ENCODE measurements at regions of chr3 and their contacts with region 1.

Region 1: GRCh38 chr3:14467814-14468620 is 65.6 kb downstream of the SLC6A6 start:
- DNase-seq: peak; percentile 92
- H3K4me3 ChIP-seq: peak overlapping the region in 1 of 2 experiments; percentile 23; a peak in 1 of 4 replicates
- H3K27ac ChIP-seq: no peak overlapping the region
- H3K4me1 ChIP-seq: peaks cover 4 to 19% of the 10 kb centered on the region in 2 experiments; a peak in 3 of 4 replicates
- H3K27me3 ChIP-seq: no peaks in the 10 kb centered on the region
- CTCF ChIP-seq: peak; percentile 95
- EP300 ChIP-seq: no peak
- RAD21 ChIP-seq: peak; percentile 93

Region 2: GRCh38 chr3:14253022-14253706 is 214.9 kb before region 1 on chr3:
- CTCF ChIA-PET with region 1: interaction called, 82 read pairs
- POLR2A ChIA-PET with region 1: no interaction called
- DNase-seq: no peak
- H3K4me3 ChIP-seq: no peak overlapping the region
- H3K27ac ChIP-seq: no peak overlapping the region
- H3K4me1 ChIP-seq: no peaks in the 10 kb centered on the region
- H3K27me3 ChIP-seq: no peaks in the 10 kb centered on the region
- CTCF ChIP-seq: no peak
- EP300 ChIP-seq: no peak
- RAD21 ChIP-seq: no peak

Region 3: GRCh38 chr3:14274999-14275961 is 192.7 kb before region 1 on chr3:
- CTCF ChIA-PET with region 1: interaction called, 16 read pairs
- POLR2A ChIA-PET with region 1: no interaction called
- DNase-seq: peak; percentile 43
- H3K4me3 ChIP-seq: no peak overlapping the region; a peak in 1 of 4 replicates
- H3K27ac ChIP-seq: no peak overlapping the region
- H3K4me1 ChIP-seq: peaks cover 0 to 12% of the 10 kb centered on the region in 2 experiments; a peak in 2 of 4 replicates
- H3K27me3 ChIP-seq: 0 out of 2 replicates have a peak, but pooled peaks cover 3% of the 10 kb centered on the region
- CTCF ChIP-seq: peak; percentile 36
- EP300 ChIP-seq: no peak
- RAD21 ChIP-seq: peak; percentile 45

Region 4: GRCh38 chr3:14452679-14453367 is 15.2 kb before region 1 on chr3:
- CTCF ChIA-PET with region 1: interaction called, 34 read pairs
- POLR2A ChIA-PET with region 1: no interaction called
- DNase-seq: no peak
- H3K4me3 ChIP-seq: peak overlapping the region in 1 of 2 experiments; percentile 29; a peak in 2 of 4 replicates
- H3K27ac ChIP-seq: peak overlapping the region; percentile 72 to 97
- H3K4me1 ChIP-seq: peaks cover 9 to 24% of the 10 kb centered on the region in 2 experiments; a peak in 3 of 4 replicates
- H3K27me3 ChIP-seq: no peaks in the 10 kb centered on the region
- CTCF ChIP-seq: peak; percentile 23; the same call in 1 of the 2 replicates
- EP300 ChIP-seq: 0 out of 4 replicates have a peak, but pooled peaks of 1 of the 2 experiments have one; percentile 62
- RAD21 ChIP-seq: peak; percentile 14; the same call in 1 of the 2 replicates

Region 5: GRCh38 chr3:14486460-14486859 is 18.4 kb after region 1 on chr3:
- CTCF ChIA-PET with region 1: interaction called, 43 read pairs
- POLR2A ChIA-PET with region 1: no interaction called
- DNase-seq: no peak
- H3K4me3 ChIP-seq: no peak overlapping the region
- H3K27ac ChIP-seq: no peak overlapping the region
- H3K4me1 ChIP-seq: no peaks in the 10 kb centered on the region; a peak in 1 of 4 replicates
- H3K27me3 ChIP-seq: no peaks in the 10 kb centered on the region
- CTCF ChIP-seq: no peak
- EP300 ChIP-seq: no peak
- RAD21 ChIP-seq: no peak

Measured in SK-N-SH (cell line).